ENCODE measurements at regions of chr6 and their contacts with region 1.

Region 1: DNA sequence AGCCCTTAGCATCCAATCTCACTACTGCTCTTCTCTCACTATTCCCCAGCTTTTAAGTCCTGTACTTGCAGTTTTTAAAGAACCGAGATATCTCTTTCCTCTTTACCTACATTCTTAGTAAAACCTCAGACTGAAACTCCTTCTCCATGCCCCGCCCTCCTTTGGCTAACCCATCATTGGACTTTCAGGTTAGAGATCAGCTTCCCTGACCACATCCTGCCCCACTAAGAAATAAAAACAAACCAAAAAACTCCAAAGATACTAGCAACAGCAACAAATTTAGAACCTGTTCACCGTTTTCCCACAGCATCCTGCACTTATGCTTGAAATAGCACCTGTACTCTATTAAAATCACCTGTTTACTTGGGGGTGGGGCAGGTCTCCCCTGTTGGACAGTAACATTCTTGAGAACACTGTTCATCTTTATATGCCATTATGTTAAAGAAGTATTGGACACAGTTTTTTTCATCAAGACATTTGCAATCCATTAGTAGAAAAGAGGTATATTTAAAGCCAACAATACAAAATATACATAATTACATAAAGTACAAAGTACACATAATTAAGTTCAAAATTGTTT is 16.3 kb upstream of the SMAP1 start:
- DNase-seq: no peak
- H3K4me3 ChIP-seq: no peak overlapping the region
- H3K27ac ChIP-seq: no peak overlapping the region
- H3K4me1 ChIP-seq: no peaks in the 10 kb centered on the region
- H3K27me3 ChIP-seq: no peaks in the 10 kb centered on the region
- CTCF ChIP-seq: no peak
- EP300 ChIP-seq: no peak
- POLR2A ChIP-seq: no peak
- RAD21 ChIP-seq: no peak

Region 2: GRCh38 chr6:70327036-70327435 is 324.4 kb before region 1 on chr6:
- CTCF ChIA-PET with region 1: no interaction called
- POLR2A ChIA-PET with region 1: no interaction called
- DNase-seq: no peak
- H3K4me3 ChIP-seq: no peak overlapping the region
- H3K27ac ChIP-seq: no peak overlapping the region
- H3K4me1 ChIP-seq: no peaks in the 10 kb centered on the region
- H3K27me3 ChIP-seq: no peaks in the 10 kb centered on the region
- CTCF ChIP-seq: no peak
- EP300 ChIP-seq: no peak
- POLR2A ChIP-seq: no peak
- RAD21 ChIP-seq: no peak

Region 3: GRCh38 chr6:70638468-70638867 is 12.9 kb before region 1 on chr6:
- CTCF ChIA-PET with region 1: interaction called, 10 read pairs
- POLR2A ChIA-PET with region 1: interaction called, 3 read pairs
- DNase-seq: no peak
- H3K4me3 ChIP-seq: no peak overlapping the region
- H3K27ac ChIP-seq: no peak overlapping the region
- H3K4me1 ChIP-seq: no peaks in the 10 kb centered on the region
- H3K27me3 ChIP-seq: no peaks in the 10 kb centered on the region
- CTCF ChIP-seq: no peak
- EP300 ChIP-seq: no peak
- POLR2A ChIP-seq: no peak
- RAD21 ChIP-seq: no peak

Region 4: DNA sequence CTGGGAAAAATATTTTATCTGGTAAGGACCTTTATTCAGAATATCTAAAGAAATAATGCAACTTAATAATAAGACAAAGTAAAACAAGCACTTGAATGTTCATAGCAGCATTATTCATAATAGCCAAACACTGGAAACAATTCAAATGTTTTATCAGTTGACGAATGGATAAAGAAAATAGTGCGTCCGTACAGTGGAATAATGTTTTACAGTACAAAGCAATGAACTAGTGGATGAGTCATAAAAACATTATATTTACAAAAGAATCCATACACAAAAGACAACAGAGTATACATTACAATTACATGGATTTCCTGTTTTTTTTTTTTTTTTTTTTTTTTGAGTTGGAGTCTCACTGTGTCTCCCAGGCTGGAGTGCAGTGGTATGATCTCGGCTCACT is 29.0 kb after region 1 on chr6:
- CTCF ChIA-PET with region 1: no interaction called
- POLR2A ChIA-PET with region 1: no interaction called
- DNase-seq: no peak
- H3K4me3 ChIP-seq: no peak overlapping the region
- H3K27ac ChIP-seq: no peak overlapping the region
- H3K4me1 ChIP-seq: peaks cover 0 to 2% (median 0%) of the 10 kb centered on the region in 4 experiments; a peak in 1 of 7 replicates
- H3K27me3 ChIP-seq: no peaks in the 10 kb centered on the region
- CTCF ChIP-seq: no peak
- EP300 ChIP-seq: no peak
- POLR2A ChIP-seq: no peak
- RAD21 ChIP-seq: no peak

Region 5: GRCh38 chr6:70839286-70840266 is 188.2 kb after region 1 on chr6:
- CTCF ChIA-PET with region 1: no interaction called
- POLR2A ChIA-PET with region 1: no interaction called
- DNase-seq: no peak
- H3K4me3 ChIP-seq: no peak overlapping the region
- H3K27ac ChIP-seq: no peak overlapping the region
- H3K4me1 ChIP-seq: peaks cover 0 to 3% (median 0%) of the 10 kb centered on the region in 4 experiments; a peak in 1 of 7 replicates
- H3K27me3 ChIP-seq: no peaks in the 10 kb centered on the region
- CTCF ChIP-seq: no peak
- EP300 ChIP-seq: no peak
- POLR2A ChIP-seq: no peak
- RAD21 ChIP-seq: no peak